Heart right ventricle (tissue), 16 donors: ENCODE measurements at regions of chr19 and their contacts with region 1.

Region 1: DNA sequence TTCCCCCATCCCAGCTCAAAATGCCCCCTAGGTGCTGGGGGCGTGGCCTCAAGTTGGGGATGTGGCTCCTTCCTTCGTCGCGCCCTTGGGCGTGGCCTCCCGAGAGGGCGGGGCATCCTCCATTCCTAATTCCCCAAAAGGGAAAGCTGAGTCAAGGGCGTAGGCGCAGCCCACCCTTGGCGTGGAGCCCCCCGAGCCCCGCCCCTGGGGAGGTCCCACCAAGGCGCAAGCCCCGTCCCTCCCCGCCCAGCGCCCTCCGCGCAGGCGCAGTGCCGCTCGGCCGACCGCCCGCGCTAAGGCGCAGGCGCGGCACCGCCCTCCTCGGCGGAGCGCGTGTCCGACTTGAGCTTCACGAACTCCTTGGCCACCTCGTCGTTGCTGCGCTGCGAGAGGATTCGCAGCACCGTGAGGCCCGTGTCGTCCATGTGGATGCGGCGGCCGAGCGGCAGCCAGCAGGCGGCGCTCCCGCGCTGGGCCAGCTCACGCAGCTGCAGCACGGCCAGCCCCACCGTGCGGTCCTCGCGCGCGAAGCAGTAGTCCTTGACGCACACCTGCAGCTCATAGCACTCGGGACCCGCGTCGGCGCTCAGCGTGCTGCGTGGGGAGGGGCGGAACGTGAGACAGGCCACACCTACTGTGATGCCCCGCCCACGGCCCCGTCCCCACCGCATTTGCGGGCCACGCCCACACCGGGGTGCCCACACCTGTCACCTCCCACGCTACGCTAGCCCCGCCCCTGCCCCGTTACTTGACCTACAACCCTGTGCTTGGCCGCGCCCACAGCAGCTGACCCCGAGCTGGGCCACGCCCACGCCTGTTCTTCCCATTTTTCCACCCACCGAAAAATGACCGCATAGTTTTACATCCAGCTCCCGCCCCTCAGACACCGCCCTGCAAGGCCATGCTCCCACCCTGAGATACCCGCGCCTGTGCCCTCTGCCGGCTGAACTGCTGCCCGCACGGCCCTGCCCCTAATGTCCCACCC is 50.6 kb downstream of the COLGALT1 start:
- DNase-seq: peak; percentile 44 to 67
- ATAC-seq: peak; percentile 65 to 91 (median 76)
- H3K4me3 ChIP-seq: peak overlapping the region in 9 of 10 donors; percentile 23 to 57 (median 44)
- H3K27ac ChIP-seq: peak overlapping the region in 5 of 10 donors; percentile 0 to 68 (median 26)
- H3K4me1 ChIP-seq: peaks cover 5 to 15% (median 10%) of the 10 kb centered on the region in 9 donors
- H3K27me3 ChIP-seq: peaks cover 0 to 47% (median 26%) of the 10 kb centered on the region in 7 donors
- CTCF ChIP-seq: peak; percentile 18 to 74 (median 58)

Region 2: GRCh38 chr19:17747205-17748098 is 141.4 kb after region 1 on chr19:
- intact Hi-C with region 1: loop called in 1 of 10 experiments (anchors 10 kb)
- DNase-seq: peak; percentile 89 to 91
- ATAC-seq: peak; percentile 97 to 99 (median 99)
- H3K4me3 ChIP-seq: peak overlapping the region in 9 of 10 donors; percentile 14 to 63 (median 45)
- H3K27ac ChIP-seq: peak overlapping the region in 1 of 10 donors; percentile 64
- H3K4me1 ChIP-seq: peaks cover 0 to 32% (median 10%) of the 10 kb centered on the region in 9 donors
- H3K27me3 ChIP-seq: peaks cover 0 to 6% (median 0%) of the 10 kb centered on the region in 7 donors
- CTCF ChIP-seq: no peak

Region 3: DNA sequence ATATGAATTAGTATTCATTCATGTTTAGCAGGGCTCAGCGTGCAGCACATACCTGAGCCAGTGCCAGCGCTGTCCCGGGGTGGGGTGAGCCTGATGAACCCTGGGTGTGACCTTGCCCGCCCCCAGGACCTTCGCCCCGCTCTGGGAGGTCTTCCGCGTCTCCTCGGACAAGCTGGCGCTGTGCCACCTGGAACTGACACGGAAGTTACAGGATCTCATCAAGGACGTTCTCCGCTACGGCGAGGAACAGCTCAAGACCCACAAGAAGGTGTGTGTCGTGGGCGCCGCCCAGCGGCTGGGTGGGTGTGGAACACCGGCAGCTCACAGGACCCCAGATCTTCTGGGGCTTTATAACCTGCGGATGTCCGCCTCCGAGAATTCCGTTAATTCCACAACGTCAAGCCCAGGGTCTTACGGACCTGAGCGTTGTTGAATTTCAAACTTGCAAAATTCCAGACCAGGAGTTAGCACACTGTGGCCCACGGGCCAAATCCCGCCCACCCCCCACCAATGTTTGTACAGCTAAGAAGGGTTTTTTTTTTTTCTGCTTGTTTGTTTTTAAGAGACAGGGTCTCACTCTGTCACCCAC is 160.6 kb after region 1 on chr19:
- intact Hi-C with region 1: loop called in 3 of 10 experiments (anchors 10 kb)
- DNase-seq: peak; percentile 70 to 81
- ATAC-seq: peak; percentile 72 to 93 (median 82)
- H3K4me3 ChIP-seq: peak overlapping the region in 5 of 10 donors; percentile 6 to 29 (median 27)
- H3K27ac ChIP-seq: peak overlapping the region in 1 of 10 donors; percentile 36
- H3K4me1 ChIP-seq: peaks cover 0 to 13% (median 6%) of the 10 kb centered on the region in 9 donors
- H3K27me3 ChIP-seq: peaks cover 0 to 10% (median 0%) of the 10 kb centered on the region in 7 donors
- CTCF ChIP-seq: peak; percentile 63 to 88 (median 80)